Mammary epithelial cell (primary cell): ENCODE measurements at regions of chr1 and their contacts with region 1.

Region 1: DNA sequence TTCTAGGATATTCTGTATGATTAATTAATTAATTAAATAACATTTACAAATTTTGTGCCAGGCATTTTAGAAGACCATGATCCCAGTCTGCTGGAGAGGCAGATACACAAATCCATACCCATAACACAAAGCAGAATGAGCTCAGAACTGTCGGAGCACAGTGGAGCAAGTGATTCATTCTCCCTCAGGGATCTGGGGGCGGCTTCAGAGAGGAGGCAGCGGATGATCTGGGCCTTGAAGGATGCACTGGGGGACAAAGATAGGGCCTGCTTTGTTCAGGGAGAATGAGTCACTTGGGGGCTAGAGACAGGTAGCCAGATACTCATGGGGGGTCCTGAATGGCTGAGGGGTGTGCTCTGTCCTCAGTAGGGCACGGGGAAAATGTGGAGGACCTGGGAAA is 50.9 kb upstream of the TRABD2B start:
- DNase-seq: peak; percentile 79
- H3K4me3 ChIP-seq: no peak overlapping the region
- H3K27ac ChIP-seq: no peak overlapping the region
- H3K4me1 ChIP-seq: peaks cover 65% of the 10 kb centered on the region
- H3K27me3 ChIP-seq: no peaks in the 10 kb centered on the region
- CTCF ChIP-seq: no peak

Region 2: GRCh38 chr1:48007044-48007443 is 41.0 kb before region 1 on chr1:
- CTCF ChIA-PET with region 1: interaction called, 9 read pairs
- dilution Hi-C with region 1: no loop called
- in situ Hi-C with region 1: loop called in 1 of 2 experiments (anchors 5 kb)
- intact Hi-C with region 1: no loop called
- DNase-seq: peak; percentile 92
- H3K4me3 ChIP-seq: no peak overlapping the region
- H3K27ac ChIP-seq: no peak overlapping the region
- H3K4me1 ChIP-seq: peaks cover 10% of the 10 kb centered on the region
- H3K27me3 ChIP-seq: no peaks in the 10 kb centered on the region
- CTCF ChIP-seq: no peak

Region 3: GRCh38 chr1:48019714-48020315 is 28.2 kb before region 1 on chr1:
- CTCF ChIA-PET with region 1: no interaction called
- dilution Hi-C with region 1: no loop called
- in situ Hi-C with region 1: no loop called
- intact Hi-C with region 1: loop called (anchors 5 kb)
- DNase-seq: peak; percentile 60
- H3K4me3 ChIP-seq: no peak overlapping the region
- H3K27ac ChIP-seq: peak overlapping the region; percentile 79
- H3K4me1 ChIP-seq: peaks cover 30% of the 10 kb centered on the region
- H3K27me3 ChIP-seq: no peaks in the 10 kb centered on the region
- CTCF ChIP-seq: no peak

Region 4: DNA sequence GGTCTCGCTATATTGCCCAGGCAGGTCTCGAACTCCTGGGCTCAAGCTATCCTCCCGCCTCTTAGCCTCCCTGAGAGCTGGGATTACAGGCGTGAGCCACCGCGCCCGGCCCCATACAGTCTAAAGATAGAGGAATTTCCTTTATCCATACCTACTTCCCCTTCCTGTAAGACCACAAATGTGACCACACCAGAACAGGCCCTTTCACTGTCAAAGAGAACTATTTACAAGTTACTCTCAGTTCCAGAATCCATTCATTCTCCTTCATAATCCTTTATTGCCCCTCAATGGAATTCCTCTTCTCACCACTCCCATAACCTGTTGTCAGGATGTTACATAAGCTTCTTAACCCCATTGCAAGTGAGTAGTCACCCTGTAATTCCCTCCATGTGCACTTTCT is 148.2 kb after region 1 on chr1:
- CTCF ChIA-PET with region 1: no interaction called
- dilution Hi-C with region 1: no loop called
- in situ Hi-C with region 1: no loop called
- intact Hi-C with region 1: no loop called
- DNase-seq: peak; percentile 51
- H3K4me3 ChIP-seq: no peak overlapping the region
- H3K27ac ChIP-seq: no peak overlapping the region
- H3K4me1 ChIP-seq: peaks cover 8% of the 10 kb centered on the region
- H3K27me3 ChIP-seq: peaks cover 2% of the 10 kb centered on the region
- CTCF ChIP-seq: no peak